GM10248 (cell line): ENCODE measurements at regions of chr1 and their contacts with region 1.

Region 1: DNA sequence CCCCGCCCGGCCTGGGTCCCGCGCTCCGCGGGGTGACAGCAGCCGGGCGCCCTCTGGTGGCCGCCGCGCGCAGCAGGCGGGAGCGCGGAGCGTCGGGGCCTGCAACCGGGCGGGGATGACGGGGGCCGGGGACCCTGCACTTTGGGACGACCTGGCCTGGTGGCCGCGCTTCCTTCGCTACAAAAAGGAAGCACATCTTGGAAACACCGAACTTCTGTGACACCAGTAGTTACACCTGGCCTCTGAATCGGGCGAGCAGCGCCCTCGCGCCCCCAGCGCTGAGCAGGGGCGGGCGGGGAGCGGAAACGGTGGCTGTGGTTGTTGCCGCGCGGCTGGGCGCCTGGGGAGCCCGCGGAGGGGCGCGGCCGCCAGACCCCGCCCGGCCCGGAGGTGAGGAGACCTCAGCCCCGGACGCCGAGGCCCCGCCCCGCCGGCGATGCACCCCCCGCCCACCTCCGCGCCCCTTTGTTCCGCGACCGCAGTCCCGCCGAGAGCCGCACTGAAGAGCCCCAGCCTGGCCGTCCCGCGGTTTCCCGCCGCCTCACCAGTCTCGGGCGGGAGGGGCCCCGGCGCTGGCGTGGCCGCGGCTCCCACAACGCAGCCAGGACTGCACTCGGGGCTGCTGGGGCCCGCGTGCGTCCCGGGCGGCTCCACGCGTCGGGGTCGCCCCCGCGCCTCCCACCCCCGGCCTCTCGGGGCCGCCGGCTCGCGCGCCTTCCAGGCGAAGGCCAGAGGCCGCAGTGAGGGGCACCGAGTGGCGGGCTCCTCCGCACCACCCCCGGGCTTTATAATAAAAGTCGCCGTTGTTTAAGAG is 59.3 kb downstream of the H3-3A start:
- DNase-seq: peak; percentile 88
- CTCF ChIP-seq: peak; percentile 87

Region 2: DNA sequence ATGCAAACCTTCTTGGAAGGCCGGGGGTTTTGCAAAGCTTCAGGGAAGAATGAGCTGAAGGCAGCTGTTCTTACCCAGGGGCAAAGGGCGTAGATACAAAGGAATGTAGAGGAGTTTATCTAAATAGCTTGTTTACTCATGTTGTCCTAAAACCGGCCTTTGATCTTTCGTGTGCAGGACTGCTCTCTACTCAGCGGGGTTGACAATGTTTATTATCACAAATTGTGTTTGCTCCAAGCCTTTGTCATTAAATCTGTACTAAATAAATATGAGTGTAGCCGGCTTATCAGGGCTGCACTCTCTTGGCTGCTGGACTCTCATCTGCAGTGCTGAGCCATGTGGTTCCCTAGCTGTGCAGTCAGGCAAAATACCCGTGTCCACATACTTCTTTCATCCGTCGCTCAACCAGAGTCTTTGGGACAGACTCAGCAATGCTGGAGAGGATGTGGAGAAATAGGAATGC is 892.9 kb before region 1 on chr1:
- CTCF ChIA-PET with region 1: no interaction called
- POLR2A ChIA-PET with region 1: no interaction called
- DNase-seq: no peak
- CTCF ChIP-seq: no peak

Region 3: DNA sequence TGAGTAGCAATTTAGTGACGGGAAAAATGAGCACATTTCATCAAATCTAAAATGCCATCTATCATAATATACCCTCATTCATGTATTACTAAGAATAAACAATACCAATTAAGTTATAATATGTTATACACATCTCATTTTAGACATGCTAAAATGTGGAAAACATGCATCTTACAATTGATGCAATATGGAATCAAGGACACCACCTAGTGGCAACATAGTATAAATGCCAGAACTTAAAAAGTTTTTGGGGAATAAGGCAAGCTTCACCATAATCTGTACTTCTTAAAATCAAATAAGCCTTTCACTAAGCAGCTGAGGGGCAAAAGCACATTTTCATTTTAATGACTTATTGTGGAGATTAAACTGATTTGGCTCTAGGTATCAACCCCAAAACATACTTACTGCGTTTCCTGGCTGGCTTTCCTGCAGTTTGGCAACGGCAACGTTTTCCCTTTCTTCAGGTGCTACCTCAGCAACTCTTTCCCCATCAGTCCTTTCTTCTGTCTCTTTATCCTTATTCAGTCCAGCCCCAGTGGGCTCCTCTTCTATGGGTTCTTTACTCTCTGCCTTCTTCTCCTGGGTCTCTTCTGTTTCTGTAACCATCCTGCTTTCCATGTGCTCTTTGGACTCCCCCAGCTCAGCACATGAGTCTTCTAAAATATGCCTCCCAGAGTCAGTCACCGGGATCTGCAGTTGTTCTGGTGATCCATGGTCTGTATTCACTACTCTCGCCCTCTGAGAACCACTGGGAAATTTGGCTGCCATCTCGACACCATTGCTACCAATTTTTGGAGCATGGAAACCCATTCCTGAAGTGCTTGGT is 134.1 kb before region 1 on chr1:
- CTCF ChIA-PET with region 1: interaction called, 10 read pairs
- POLR2A ChIA-PET with region 1: no interaction called
- DNase-seq: no peak
- CTCF ChIP-seq: peak; percentile 60

Region 4: DNA sequence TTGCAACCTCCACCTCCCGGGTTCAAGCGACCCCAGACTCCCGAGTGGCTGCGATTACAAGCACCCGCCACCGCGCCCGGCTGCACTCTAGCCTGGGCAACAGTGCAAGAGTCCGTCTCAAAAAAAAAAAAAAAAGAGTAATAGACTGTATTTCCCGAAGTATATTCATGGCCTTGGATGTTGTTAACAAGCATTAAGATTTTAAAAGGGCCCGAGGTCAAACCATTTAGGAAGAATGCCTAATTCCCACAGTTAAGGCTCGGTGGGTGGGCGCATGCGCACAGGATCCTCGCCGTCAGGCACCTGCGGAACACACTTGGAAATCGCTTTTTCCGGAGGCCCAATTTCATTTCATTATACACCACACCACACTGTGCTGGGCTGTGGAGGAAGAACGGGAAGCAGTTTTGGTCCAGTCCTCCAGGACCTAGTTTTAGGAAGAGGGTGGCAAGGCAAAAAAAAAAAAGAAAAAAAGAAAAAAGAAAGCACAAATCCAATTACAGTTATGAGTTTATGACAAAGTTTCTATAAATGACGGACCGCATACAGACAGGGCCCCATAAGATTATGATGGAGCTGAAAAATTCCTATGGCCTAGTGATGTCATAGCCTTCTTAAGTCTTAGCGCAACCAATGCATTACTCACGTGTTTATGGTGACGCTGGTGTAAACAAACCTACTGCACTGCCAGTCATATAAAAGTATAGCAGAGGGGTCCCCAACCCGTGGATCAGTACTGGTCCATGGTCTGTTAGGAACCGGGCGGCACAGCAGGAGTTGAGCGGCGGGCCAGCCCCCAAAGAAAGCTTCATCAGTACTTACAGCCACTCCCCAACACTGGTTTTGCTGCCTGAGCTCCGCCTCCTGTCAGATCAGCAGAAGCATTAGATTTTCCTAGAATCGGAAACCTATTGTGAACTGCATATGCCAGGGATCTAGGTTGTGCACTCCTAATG is 21.1 kb before region 1 on chr1:
- CTCF ChIA-PET with region 1: interaction called, 10 read pairs
- POLR2A ChIA-PET with region 1: no interaction called
- DNase-seq: peak; percentile 60
- CTCF ChIP-seq: no peak

Region 5: GRCh38 chr1:226149806-226150205 is 28.0 kb after region 1 on chr1:
- CTCF ChIA-PET with region 1: interaction called, 40 read pairs
- POLR2A ChIA-PET with region 1: no interaction called
- DNase-seq: no peak
- CTCF ChIP-seq: no peak

Region 6: DNA sequence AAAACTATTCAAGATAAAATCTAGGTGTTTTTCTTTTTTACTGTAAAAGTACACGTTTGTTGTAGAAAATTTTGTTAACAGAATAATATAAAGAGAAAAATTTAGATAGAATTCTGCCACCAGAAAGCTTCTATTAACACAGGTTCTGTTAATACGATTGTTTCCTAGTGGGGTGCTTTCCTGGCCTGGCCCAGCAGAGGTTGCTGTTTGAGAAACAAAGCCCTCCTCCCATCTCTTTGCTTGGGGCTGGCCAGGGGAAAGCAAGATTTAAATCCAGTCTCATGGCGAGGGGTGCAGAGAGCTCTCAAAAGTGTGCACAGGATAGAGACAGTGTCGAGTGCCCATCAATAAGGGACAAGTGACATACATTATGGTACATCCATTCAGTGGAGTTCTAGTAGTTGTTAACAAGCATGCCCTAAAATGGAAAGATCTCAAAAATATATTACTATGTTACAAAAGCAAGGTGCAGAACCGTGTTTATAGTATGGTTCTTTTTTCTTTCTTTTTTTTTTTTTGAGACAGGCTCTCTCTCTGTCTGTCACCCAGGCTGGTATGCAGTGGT is 79.3 kb after region 1 on chr1:
- CTCF ChIA-PET with region 1: interaction called, 186 read pairs
- POLR2A ChIA-PET with region 1: no interaction called
- DNase-seq: peak; percentile 71
- CTCF ChIP-seq: peak; percentile 61

Region 7: DNA sequence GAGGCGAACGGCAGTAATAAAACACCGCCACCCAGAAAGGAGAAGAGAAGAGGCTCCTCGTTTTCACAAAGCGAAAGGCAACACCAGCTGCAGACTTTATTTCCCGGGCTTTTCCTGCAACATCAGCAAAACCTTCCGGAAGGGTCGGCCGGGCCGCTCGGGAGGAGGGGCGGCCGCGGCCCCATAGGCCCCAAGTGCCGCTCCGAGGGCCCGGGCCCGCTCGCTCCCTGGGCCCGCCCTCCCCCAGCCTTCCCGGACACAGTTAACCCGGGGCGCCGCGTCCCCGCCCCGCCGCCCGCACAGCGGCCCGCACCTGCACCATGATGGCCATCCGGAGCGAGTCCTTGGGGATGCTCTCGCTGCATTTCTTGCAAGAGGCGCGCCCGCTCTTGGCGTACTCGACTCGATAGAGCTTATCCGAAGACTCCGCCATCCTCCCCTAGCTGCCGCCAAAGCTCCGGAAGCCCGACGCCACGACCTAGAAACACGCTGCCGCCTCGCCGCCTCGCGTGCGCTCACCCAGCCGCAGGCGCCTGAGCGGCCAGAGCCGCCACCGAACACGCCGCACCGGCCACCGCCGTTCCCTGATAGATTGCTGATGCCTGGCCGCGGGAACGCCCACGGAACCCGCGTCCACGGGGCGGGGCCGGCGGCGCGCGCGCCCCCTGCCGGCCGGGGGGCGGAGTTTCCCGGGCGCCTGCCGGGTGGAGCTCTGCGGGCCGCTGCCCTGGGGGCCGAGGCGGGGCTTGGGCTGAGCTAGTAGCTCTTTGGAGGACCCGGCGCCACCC is 285.9 kb after region 1 on chr1 and contains the start of gene PARP1:
- CTCF ChIA-PET with region 1: interaction called, 21 read pairs
- POLR2A ChIA-PET with region 1: no interaction called
- DNase-seq: peak; percentile 97
- CTCF ChIP-seq: peak; percentile 72